ENCODE measurements at regions of chr18 and their contacts with region 1.

Region 1: DNA sequence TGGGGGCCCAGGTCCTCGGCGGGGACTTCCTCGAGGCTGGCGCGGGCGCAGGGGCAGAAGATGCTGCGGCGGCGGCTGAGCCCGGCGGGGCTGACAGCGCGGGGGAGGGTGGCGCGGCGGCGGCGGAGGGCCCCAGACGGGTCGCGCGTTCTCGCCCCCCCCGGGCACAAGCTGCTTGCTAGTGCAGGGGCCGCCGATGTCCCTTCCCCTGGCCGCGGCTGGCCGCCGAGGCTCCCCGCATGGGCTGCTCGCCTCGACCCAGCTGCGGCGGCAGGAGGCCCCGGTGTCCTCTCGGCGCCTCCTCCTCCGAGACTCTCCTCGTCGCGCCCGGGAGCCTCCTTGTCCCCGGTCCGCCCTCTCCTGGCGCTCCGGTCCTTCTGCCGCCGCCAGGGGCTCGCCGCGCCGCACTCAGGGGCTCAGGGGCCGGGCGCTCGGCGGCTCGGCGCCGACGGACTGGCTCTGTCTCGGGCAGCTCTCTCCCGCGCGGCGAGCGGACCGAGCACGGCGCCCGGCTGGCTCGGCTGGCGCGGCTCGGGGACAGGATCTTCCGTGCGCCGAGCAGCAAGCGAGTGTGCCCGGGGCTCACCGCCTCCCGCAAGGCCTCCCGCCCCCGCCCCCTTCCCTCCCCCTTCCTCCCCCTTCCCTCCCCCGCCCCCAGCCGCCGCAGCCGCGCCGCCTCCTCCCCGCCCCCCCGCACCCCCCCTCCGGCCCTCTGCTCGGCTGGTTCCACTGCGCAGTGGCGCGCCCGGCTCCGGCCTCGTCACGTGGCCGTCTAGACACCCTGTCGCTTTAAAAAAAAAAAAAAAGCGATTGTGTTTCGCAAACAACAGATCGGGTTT is 902 bp upstream of the SMAD7 start:
- DNase-seq: peak; percentile 93 to 94
- ATAC-seq: peak; percentile 85
- H3K4me3 ChIP-seq: peak overlapping the region; percentile 65 to 99
- H3K27ac ChIP-seq: peak overlapping the region; percentile 96
- H3K4me1 ChIP-seq: peaks cover 6 to 9% of the 10 kb centered on the region in 2 donors
- H3K27me3 ChIP-seq: no peaks in the 10 kb centered on the region

Region 2: GRCh38 chr18:48675352-48675761 is 276.3 kb before region 1 on chr18:
- intact Hi-C with region 1: loop called (anchors 2 to 10 kb)
- DNase-seq: peak; percentile 95
- ATAC-seq: peak; percentile 92
- H3K4me3 ChIP-seq: no peak overlapping the region
- H3K27ac ChIP-seq: no peak overlapping the region
- H3K4me1 ChIP-seq: peaks cover 1 to 5% of the 10 kb centered on the region in 2 donors
- H3K27me3 ChIP-seq: no peaks in the 10 kb centered on the region

Region 3: DNA sequence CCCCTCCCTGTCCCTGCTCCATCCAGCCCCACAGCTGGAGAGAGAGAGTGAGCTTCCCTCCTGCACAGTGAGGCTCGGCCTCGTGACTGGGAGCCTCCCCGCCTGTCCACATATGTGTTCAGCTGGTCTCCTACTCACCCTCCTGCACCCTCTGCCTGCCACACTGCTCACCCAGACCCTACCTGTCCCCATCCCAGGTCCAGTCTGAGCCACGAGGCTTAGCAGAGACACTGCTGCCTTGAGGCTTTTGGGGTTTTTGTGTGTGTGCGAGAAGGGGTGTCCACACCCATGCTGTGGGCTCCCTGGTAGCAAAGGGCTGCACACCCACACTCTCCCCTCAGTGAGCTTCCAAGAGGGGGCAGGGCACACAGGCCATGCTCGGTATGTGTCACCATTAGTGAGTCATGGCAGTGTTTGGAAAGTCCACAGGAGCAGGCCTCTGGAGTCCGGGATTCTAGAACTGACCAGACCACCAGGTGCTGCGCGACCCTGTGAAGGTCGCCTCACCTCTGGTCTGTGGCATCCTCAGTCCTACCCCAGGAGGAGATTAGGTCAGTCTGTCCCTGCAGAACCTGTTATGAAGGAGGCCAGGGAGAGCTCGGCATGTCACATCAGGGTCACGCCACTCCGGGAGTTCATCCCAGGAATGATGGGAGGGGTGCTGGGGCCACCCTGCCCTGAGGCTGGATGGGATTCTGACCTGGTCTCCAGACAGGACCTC is 39.0 kb after region 1 on chr18:
- intact Hi-C with region 1: loop called in 1 of 2 experiments (anchors 2 kb)
- DNase-seq: peak; percentile 76 to 89
- ATAC-seq: peak; percentile 58
- H3K4me3 ChIP-seq: no peak overlapping the region
- H3K27ac ChIP-seq: peak overlapping the region in 1 of 2 donors; percentile 55
- H3K4me1 ChIP-seq: no peaks in the 10 kb centered on the region
- H3K27me3 ChIP-seq: no peaks in the 10 kb centered on the region

Region 4: DNA sequence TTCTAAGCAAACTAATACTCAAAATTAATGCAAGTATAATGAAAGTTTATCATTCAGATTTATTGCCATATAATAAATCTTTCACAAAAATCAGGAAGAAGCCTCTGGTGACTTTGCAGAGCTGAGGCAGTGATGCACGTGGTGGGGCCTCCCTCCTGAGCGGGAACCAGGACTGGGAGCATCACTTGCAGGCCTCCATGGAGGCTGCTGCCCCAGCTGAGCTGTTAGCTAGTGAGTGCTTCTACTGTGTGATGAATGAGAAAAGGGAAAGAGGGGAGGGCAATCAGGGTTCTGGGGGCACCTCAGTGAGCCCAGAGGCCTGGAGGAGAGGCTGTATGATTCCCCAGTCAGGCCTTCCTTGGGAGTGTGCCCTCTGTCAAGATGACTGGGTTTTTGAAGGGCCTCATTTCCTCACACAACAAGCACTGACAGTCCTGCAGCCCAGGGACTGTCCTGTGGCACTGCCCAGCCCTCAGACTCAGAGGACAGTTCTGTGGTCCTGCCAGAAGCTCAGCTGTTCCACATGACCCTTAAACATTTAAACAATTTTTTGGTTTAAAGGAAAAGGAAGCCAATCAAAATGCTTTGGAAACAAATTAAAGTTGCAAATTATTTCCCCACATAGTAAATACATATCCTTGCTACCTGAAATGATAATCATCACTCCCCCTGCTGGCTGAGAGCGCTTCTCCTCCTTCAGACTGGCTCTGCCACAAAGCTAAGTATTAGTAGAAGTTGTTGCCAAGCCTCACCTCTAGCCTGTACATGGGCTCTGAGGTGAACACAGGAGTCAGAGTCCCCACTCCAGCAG is 90.0 kb after region 1 on chr18:
- intact Hi-C with region 1: loop called in 1 of 2 experiments (anchors 5 kb)
- DNase-seq: no peak
- ATAC-seq: peak; percentile 58
- H3K4me3 ChIP-seq: no peak overlapping the region
- H3K27ac ChIP-seq: no peak overlapping the region
- H3K4me1 ChIP-seq: no peaks in the 10 kb centered on the region
- H3K27me3 ChIP-seq: no peaks in the 10 kb centered on the region

Region 5: DNA sequence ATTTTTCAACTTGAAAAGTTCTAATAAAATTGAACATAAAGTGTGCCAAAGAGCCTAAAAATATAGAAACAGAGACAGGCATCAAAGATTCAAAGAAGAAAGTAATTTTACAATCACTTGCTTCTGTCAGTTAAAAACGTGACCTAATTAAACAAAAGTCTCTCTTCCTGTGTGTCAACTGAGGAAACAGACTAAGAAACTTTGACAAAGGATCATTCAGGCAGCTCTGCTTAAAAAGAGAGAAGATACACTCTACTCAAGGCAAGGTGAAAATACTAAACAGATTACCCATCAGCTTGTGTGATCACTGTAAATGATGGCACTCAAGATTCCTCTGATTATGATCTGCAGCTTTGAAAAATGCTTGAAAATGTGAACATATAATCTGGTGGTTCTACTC is 461.0 kb after region 1 on chr18:
- intact Hi-C with region 1: loop called in 1 of 2 experiments (anchors 10 kb)
- DNase-seq: no peak
- ATAC-seq: no peak
- H3K4me3 ChIP-seq: no peak overlapping the region
- H3K27ac ChIP-seq: no peak overlapping the region
- H3K4me1 ChIP-seq: peaks cover 0 to 2% of the 10 kb centered on the region in 2 donors
- H3K27me3 ChIP-seq: no peaks in the 10 kb centered on the region